Thyroid gland (tissue), 4 donors: ENCODE measurements at regions of chr12 and their contacts with region 1.

Region 1: DNA sequence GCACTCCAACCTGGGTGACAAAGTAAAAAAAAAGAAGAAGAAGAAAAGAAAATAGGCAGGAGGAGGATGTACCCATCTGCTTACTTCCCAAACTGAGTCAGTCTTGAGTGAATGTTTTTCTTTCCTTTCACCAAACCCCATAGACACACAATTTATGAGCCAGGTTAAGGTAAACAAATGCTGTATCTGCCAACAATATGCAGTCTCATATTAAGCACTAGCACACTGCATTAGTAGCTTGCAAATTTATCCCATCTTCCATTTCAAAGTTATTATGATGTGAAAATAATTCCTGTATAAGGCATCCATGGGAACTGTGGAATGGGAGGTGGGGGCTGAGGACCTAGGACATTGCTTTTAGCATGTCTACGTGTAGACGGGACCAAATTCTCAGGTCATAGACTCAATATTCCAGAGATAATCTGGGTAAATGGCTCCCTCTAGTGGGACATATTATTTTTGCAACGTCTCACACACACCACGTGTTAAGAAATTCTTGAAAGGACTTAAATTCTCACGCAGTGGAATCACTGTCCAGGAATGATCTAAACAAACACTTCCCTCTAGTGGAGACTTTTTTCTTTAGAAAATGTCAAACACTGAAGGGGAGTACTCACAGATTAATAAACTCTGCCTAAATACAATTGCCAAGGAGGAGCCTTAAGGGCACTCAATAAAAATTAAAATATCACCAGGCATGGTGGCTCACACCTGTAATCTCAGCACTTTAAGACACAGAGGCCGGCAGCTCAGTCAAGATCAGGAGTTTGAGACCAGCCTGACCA is 17.1 kb upstream of the OR10P1 start:
- DNase-seq: peak; percentile 11 to 14
- H3K4me3 ChIP-seq: no peak overlapping the region
- H3K27ac ChIP-seq: no peak overlapping the region
- H3K4me1 ChIP-seq: no peaks in the 10 kb centered on the region
- H3K27me3 ChIP-seq: no peaks in the 10 kb centered on the region
- CTCF ChIP-seq: peak; percentile 64 to 93 (median 77)
- POLR2A ChIP-seq: no peak

Region 2: GRCh38 chr12:55194382-55194781 is 425.2 kb before region 1 on chr12:
- intact Hi-C with region 1: loop called (anchors 5 kb)
- DNase-seq: no peak
- H3K4me3 ChIP-seq: no peak overlapping the region
- H3K27ac ChIP-seq: no peak overlapping the region
- H3K4me1 ChIP-seq: no peaks in the 10 kb centered on the region
- H3K27me3 ChIP-seq: no peaks in the 10 kb centered on the region
- CTCF ChIP-seq: no peak
- POLR2A ChIP-seq: no peak

Region 3: DNA sequence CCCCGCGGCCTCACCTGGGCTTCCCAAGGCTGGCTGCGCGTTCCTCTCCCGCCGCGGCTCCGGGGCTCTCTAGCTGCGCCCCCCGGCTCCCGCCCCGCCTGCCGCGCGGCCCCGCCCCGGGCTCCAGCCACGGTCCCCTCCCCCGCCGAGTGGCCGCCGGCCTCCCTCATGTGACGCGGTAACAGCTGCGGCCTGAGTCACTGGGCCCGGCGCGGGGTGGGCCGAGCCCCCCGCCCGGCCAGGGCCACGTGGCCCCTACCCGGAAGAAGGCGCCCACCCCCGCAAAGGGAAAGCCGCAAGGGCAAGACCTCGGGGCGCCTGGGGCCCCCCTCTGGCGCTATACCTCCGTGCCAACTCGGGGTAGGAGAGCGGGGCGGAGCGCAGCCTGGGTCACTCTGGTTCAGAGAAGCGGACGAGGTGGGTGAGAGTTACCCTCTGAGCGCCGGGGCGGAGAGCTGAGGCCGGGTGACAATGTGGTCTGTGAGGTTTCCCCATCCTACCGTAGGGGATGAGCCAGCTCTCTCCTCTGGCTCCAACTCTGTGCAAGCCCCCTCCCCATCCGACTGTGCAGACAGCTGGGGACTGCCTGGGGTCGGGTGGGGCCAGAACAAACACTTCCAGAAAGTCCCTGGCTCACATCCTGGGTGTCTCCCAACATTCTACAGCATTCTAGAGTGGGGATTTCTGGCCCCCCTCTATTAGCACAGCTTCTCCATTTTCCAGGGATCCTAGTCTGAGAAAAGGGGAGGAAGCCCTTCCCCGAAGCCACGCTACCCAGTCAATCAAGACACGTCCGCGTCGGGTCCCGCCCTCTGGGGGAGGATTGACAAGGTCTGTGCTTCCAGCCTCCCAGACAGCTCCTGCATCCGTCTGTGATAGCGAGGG is 109.6 kb after region 1 on chr12 and contains the start of gene CD63:
- intact Hi-C with region 1: no loop called
- DNase-seq: peak; percentile 94
- H3K4me3 ChIP-seq: peak within 1 kb of the TSS; percentile 62 to 90 (median 85)
- H3K27ac ChIP-seq: peak within 1 kb of the TSS; percentile 89 to 98 (median 96)
- H3K4me1 ChIP-seq: peaks cover 30 to 46% of the 10 kb centered on the region in 2 donors
- H3K27me3 ChIP-seq: no peaks in the 10 kb centered on the region
- CTCF ChIP-seq: no peak
- POLR2A ChIP-seq: peak; percentile 64 to 87
- total RNA-seq, gene CD63: 683 to 1,145 (median 1,122) TPM